CD8-positive, alpha-beta memory T cell (primary cell): ENCODE measurements at regions of chr5 and their contacts with region 1.

Region 1: GRCh38 chr5:151126199-151126645 is 31.4 kb downstream of the ANXA6 start:
- DNase-seq: peak; percentile 52 to 75 (median 57)
- H3K4me3 ChIP-seq: no peak overlapping the region
- H3K4me3 Mint-ChIP-seq: peak overlapping the region in 1 of 7 donors; percentile 2
- H3K27ac ChIP-seq: no peak overlapping the region
- H3K27ac Mint-ChIP-seq: peak overlapping the region; percentile 10 to 95 (median 76)
- H3K4me1 ChIP-seq: peaks cover 15% of the 10 kb centered on the region
- H3K4me1 Mint-ChIP-seq: peaks cover 30 to 61% (median 51%) of the 10 kb centered on the region in 3 donors
- H3K27me3 ChIP-seq: no peaks in the 10 kb centered on the region
- H3K27me3 Mint-ChIP-seq: no peaks in the 10 kb centered on the region

Region 2: GRCh38 chr5:151051066-151051930 is 74.9 kb before region 1 on chr5:
- CTCF ChIA-PET with region 1: interaction called, 267 read pairs
- POLR2A ChIA-PET with region 1: no interaction called
- DNase-seq: peak; percentile 49 to 81 (median 57)
- H3K4me3 ChIP-seq: no peak overlapping the region
- H3K4me3 Mint-ChIP-seq: no peak overlapping the region
- H3K27ac ChIP-seq: no peak overlapping the region
- H3K27ac Mint-ChIP-seq: peak overlapping the region in 5 of 8 donors; percentile 54 to 79 (median 74)
- H3K4me1 ChIP-seq: no peaks in the 10 kb centered on the region
- H3K4me1 Mint-ChIP-seq: peaks cover 9 to 23% (median 17%) of the 10 kb centered on the region in 3 donors
- H3K27me3 ChIP-seq: no peaks in the 10 kb centered on the region
- H3K27me3 Mint-ChIP-seq: no peaks in the 10 kb centered on the region

Region 3: DNA sequence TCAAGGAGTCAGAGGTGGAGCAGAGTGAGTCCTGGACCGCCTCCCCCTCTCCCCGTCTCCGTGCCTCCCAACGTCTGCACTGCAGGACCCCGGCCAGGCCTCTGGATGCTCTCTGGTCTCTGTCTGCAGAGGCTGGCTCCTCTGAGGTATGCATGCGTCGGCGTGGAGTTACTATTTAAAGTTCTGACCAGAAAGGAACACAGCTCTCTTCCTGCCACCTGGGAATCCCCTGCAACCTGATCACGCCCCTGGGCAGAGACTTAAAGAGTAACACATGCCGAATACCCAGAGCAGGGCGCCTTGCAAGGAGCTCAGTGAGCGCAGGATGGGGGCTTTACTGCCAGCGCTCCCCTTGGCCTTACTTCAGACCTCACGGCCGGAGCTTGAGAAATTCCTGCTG is 15.3 kb after region 1 on chr5:
- CTCF ChIA-PET with region 1: interaction called, 86 read pairs
- POLR2A ChIA-PET with region 1: interaction called, 6 read pairs
- DNase-seq: peak; percentile 39 to 80 (median 45)
- H3K4me3 ChIP-seq: peak overlapping the region; percentile 35
- H3K4me3 Mint-ChIP-seq: peak overlapping the region; percentile 40 to 89 (median 82)
- H3K27ac ChIP-seq: peak overlapping the region; percentile 38
- H3K27ac Mint-ChIP-seq: peak overlapping the region; percentile 92 to 97 (median 93)
- H3K4me1 ChIP-seq: peaks cover 88% of the 10 kb centered on the region
- H3K4me1 Mint-ChIP-seq: peaks cover 92 to 100% (median 97%) of the 10 kb centered on the region in 3 donors
- H3K27me3 ChIP-seq: no peaks in the 10 kb centered on the region
- H3K27me3 Mint-ChIP-seq: no peaks in the 10 kb centered on the region

Region 4: GRCh38 chr5:151157426-151158286 is 31.4 kb after region 1 on chr5 and contains the start of gene ANXA6:
- CTCF ChIA-PET with region 1: interaction called, 308 read pairs
- POLR2A ChIA-PET with region 1: interaction called, 7 read pairs
- DNase-seq: peak; percentile 59 to 80 (median 67)
- H3K4me3 ChIP-seq: peak within 1 kb of the TSS; percentile 86
- H3K4me3 Mint-ChIP-seq: peak within 1 kb of the TSS; percentile 96 to 99 (median 97)
- H3K27ac ChIP-seq: peak within 1 kb of the TSS; percentile 70
- H3K27ac Mint-ChIP-seq: peak within 1 kb of the TSS; percentile 86 to 99 (median 94)
- H3K4me1 ChIP-seq: peaks cover 48% of the 10 kb centered on the region
- H3K4me1 Mint-ChIP-seq: peaks cover 52 to 59% (median 58%) of the 10 kb centered on the region in 3 donors
- H3K27me3 ChIP-seq: no peaks in the 10 kb centered on the region
- H3K27me3 Mint-ChIP-seq: peaks cover 0 to 2% of the 10 kb centered on the region in 2 donors
- total RNA-seq, gene ANXA6: 452 to 459 TPM

Region 5: GRCh38 chr5:151239237-151239861 is 113.1 kb after region 1 on chr5:
- CTCF ChIA-PET with region 1: interaction called, 36 read pairs
- POLR2A ChIA-PET with region 1: no interaction called
- DNase-seq: peak; percentile 42 to 73 (median 53)
- H3K4me3 ChIP-seq: no peak overlapping the region
- H3K4me3 Mint-ChIP-seq: peak overlapping the region in 6 of 7 donors; percentile 9 to 84 (median 50)
- H3K27ac ChIP-seq: no peak overlapping the region
- H3K27ac Mint-ChIP-seq: peak overlapping the region in 2 of 8 donors; percentile 12 to 25
- H3K4me1 ChIP-seq: peaks cover 17% of the 10 kb centered on the region
- H3K4me1 Mint-ChIP-seq: peaks cover 23 to 45% (median 25%) of the 10 kb centered on the region in 3 donors
- H3K27me3 ChIP-seq: no peaks in the 10 kb centered on the region
- H3K27me3 Mint-ChIP-seq: no peaks in the 10 kb centered on the region